Naive thymus-derived CD4-positive, alpha-beta T cell (primary cell): ENCODE measurements at regions of chr1 and their contacts with region 1.

Region 1: DNA sequence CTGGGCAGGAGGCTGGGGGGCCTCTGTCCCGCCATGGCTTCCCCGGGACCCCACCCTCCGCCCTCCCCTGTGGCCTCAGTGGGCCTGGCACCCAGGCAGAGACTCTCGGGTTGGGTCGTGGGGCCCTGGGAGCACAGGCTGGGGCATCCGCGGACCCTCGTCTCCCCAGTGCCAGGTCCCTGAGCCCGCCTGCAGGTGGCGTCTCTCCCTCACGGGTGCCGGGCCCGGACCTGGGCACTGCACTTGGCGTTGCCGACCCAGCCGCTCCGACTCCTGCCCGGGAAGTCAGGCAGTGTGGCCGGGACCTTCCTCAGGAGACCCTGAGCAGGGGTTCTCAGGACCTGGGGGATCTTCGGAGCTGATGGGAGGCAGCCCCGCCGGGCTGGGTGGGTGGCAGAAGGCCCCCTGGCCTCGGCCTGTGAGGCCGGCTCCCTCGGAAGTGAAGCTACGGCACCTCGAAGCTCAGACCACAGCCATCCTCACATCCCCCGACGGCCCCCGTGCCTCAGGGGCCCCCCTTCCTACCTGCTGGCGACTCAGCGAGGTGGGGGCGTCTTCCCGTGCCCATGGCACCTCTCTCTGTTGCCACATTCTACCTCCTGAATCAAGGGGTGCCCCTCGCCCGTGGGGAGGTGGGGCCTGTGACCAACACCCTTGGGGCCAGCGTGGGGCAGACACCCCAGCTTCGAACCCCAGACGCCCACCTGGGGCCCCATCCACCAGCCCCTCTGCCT is 6.4 kb upstream of the C1orf159 start:
- DNase-seq: peak; percentile 60 to 90 (median 80)
- ATAC-seq: peak; percentile 96
- H3K4me3 ChIP-seq: peak overlapping the region; percentile 45
- H3K4me3 Mint-ChIP-seq: peak overlapping the region in 4 of 10 donors; percentile 20 to 49 (median 32)
- H3K27ac ChIP-seq: peak overlapping the region; percentile 47
- H3K27ac Mint-ChIP-seq: peak overlapping the region in 1 of 9 donors; percentile 52
- H3K4me1 ChIP-seq: peaks cover 5 to 10% of the 10 kb centered on the region in 2 donors
- H3K4me1 Mint-ChIP-seq: peaks cover 0 to 15% (median 3%) of the 10 kb centered on the region in 7 donors
- H3K27me3 ChIP-seq: no peaks in the 10 kb centered on the region
- H3K27me3 Mint-ChIP-seq: peaks cover 0 to 15% (median 0%) of the 10 kb centered on the region in 5 donors

Region 2: DNA sequence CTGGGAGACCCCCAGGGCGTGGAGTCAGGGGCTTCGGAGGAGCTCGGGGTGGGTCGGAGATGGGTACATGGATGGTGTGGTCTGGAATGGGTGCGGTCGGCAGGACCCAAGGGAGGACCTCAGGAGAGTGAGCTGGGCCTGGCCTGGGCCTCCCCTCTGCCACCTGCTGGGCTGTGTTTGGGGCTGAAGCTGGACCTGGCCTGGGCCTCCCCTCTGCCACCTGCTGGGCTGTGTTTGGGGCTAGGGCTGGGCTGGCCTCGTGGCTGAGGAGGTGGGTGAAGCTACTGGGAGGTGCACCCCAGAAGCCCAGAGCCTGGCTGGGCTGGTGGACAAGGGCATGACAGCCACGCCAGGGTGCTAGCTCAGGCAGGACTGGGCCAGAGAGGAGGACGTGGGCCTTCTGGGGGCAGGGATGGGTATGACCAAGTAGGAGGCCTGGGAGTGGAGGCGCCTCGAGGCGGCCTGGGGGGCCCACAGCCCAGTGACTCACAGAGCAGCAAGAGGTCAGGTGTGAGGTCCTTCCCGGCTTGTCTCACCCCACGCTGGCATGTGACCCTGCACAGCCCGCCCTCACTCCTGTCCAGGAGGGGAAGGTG is 184.1 kb before region 1 on chr1:
- CTCF ChIA-PET with region 1: no interaction called
- POLR2A ChIA-PET with region 1: no interaction called
- intact Hi-C with region 1: no loop called
- DNase-seq: no peak
- ATAC-seq: peak; percentile 48
- H3K4me3 ChIP-seq: no peak overlapping the region
- H3K4me3 Mint-ChIP-seq: peak overlapping the region in 2 of 10 donors; percentile 12 to 30
- H3K27ac ChIP-seq: no peak overlapping the region
- H3K27ac Mint-ChIP-seq: no peak overlapping the region
- H3K4me1 ChIP-seq: peaks cover 3 to 18% of the 10 kb centered on the region in 2 donors
- H3K4me1 Mint-ChIP-seq: peaks cover 4 to 11% (median 10%) of the 10 kb centered on the region in 7 donors
- H3K27me3 ChIP-seq: peaks cover 3 to 11% of the 10 kb centered on the region in 2 donors
- H3K27me3 Mint-ChIP-seq: peaks cover 10 to 54% (median 26%) of the 10 kb centered on the region in 5 donors

Region 3: DNA sequence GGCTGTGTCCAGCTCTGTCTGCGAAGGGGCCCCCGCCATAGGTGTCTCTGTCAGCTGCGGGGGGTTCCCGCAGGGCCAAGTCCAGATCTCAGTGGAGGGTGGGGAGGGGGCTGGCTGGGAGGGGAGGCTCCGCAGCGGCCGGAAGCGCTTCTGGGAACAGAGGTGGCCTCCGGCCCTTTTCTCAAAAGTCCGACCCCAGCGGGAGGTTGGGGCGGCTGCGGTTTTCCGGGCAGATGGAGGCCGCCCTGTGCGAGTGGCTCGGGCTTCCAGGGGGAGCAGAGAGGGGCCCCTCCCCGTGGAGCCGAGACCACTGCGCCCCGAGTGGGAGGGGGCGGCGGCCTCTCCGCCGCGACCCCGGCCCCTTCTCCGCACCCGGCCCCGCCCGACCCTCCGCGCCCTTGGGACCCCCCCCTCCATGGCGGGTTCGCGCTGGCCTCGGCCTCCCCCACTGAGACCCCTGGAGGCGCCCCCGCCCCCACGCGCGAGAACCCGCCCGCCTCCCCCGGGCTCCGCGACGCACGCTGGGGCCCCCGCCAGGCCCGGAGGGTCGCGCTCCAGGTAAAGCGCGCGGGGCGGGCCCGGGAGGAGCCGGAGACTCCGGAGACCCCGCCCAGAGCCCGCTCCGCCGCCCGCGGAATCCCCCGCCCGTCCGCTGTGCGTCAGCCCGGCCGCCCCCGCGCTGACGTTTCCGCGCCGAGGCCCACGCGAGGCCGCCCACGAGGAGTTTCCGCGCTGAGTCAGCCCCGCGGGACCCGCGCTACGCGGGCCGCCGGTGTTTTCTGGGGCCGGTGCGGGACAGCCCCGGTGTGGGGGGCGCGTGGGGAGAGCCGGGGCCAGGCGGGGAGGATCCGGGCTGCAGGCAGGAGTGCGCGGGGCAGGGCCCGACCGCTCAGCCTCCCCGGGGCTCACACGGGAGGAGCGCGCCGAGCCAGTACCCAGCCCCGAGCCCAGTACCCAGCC is 78.9 kb after region 1 on chr1:
- CTCF ChIA-PET with region 1: no interaction called
- POLR2A ChIA-PET with region 1: no interaction called
- intact Hi-C with region 1: loop called in 1 of 2 experiments (anchors 2 kb)
- DNase-seq: peak; percentile 74 to 97 (median 83)
- ATAC-seq: peak; percentile 92
- H3K4me3 ChIP-seq: peak overlapping the region; percentile 24
- H3K4me3 Mint-ChIP-seq: peak overlapping the region in 9 of 10 donors; percentile 27 to 75 (median 59)
- H3K27ac ChIP-seq: peak overlapping the region; percentile 72
- H3K27ac Mint-ChIP-seq: peak overlapping the region in 5 of 9 donors; percentile 40 to 75 (median 62)
- H3K4me1 ChIP-seq: no peaks in the 10 kb centered on the region
- H3K4me1 Mint-ChIP-seq: peaks cover 0 to 11% (median 0%) of the 10 kb centered on the region in 7 donors
- H3K27me3 ChIP-seq: no peaks in the 10 kb centered on the region
- H3K27me3 Mint-ChIP-seq: no peaks in the 10 kb centered on the region

Region 4: GRCh38 chr1:1212780-1213344 is 90.6 kb after region 1 on chr1:
- CTCF ChIA-PET with region 1: no interaction called
- POLR2A ChIA-PET with region 1: no interaction called
- intact Hi-C with region 1: loop called (anchors 2 to 5 kb)
- DNase-seq: peak in 2 of 9 donors; percentile 11 to 71
- ATAC-seq: peak; percentile 50
- H3K4me3 ChIP-seq: peak overlapping the region; percentile 43
- H3K4me3 Mint-ChIP-seq: peak overlapping the region in 4 of 10 donors; percentile 23 to 78 (median 69)
- H3K27ac ChIP-seq: peak overlapping the region; percentile 50
- H3K27ac Mint-ChIP-seq: peak overlapping the region in 1 of 9 donors; percentile 62
- H3K4me1 ChIP-seq: peaks cover 17 to 27% of the 10 kb centered on the region in 2 donors
- H3K4me1 Mint-ChIP-seq: peaks cover 6 to 44% (median 29%) of the 10 kb centered on the region in 7 donors
- H3K27me3 ChIP-seq: no peaks in the 10 kb centered on the region
- H3K27me3 Mint-ChIP-seq: no peaks in the 10 kb centered on the region

Region 5: DNA sequence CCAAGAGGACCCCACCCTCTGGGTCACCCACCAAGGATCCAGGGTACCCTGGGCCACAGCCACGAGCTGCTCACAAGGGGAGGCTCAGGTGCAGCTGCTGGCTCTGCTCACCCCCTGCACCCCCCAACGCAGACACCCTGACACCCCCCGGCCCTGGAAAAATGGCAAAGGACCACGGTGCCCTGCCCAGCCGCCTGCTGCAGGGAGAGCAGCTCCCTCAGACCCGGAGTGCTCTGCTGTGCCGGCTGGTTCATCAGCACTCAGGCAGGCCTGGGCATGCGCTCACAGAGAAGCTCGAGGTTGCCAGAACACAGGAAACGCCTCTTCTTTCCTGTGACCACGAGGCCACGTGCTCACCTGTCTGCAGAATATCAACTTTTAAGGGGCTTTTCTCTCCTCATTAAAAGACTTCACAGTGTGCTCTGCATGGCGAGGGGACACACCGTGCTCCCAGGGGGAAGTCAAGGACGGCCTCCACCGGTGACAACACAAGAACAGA is 128.6 kb after region 1 on chr1:
- CTCF ChIA-PET with region 1: interaction called, 10 read pairs
- POLR2A ChIA-PET with region 1: no interaction called
- intact Hi-C with region 1: loop called (anchors 1 kb)
- DNase-seq: peak in 8 of 9 donors; percentile 39 to 79 (median 67)
- ATAC-seq: peak; percentile 95
- H3K4me3 ChIP-seq: peak overlapping the region; percentile 14
- H3K4me3 Mint-ChIP-seq: peak overlapping the region; percentile 33 to 82 (median 74)
- H3K27ac ChIP-seq: peak overlapping the region; percentile 69
- H3K27ac Mint-ChIP-seq: peak overlapping the region; percentile 40 to 96 (median 91)
- H3K4me1 ChIP-seq: peaks cover 10 to 12% of the 10 kb centered on the region in 2 donors
- H3K4me1 Mint-ChIP-seq: peaks cover 4 to 29% (median 11%) of the 10 kb centered on the region in 7 donors
- H3K27me3 ChIP-seq: no peaks in the 10 kb centered on the region
- H3K27me3 Mint-ChIP-seq: peaks cover 0 to 3% (median 0%) of the 10 kb centered on the region in 5 donors

Region 6: DNA sequence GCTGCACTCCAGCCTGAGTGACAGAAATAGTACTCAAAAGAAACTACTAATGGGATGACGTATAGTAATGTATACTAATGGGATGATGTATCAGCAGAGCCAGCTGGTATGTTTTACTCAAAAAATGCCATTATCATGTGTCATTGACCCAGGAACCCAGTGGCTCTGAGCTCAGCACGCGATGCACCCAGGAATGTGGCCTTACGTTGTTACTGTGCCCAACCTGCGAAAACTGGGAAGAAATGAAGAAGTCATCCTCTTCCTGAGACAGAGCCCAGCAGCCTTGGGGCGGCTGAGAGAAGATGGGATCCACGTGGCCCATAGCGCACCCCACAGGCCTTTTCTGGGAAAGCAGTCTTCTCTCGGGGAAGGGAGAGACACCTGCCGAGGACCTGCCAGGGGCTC is 142.6 kb after region 1 on chr1:
- CTCF ChIA-PET with region 1: interaction called, 6 read pairs
- POLR2A ChIA-PET with region 1: no interaction called
- intact Hi-C with region 1: loop called in 1 of 2 experiments (anchors 2 kb)
- DNase-seq: peak in 1 of 9 donors; percentile 18
- ATAC-seq: peak; percentile 31
- H3K4me3 ChIP-seq: no peak overlapping the region
- H3K4me3 Mint-ChIP-seq: peak overlapping the region in 1 of 10 donors; percentile 20
- H3K27ac ChIP-seq: no peak overlapping the region
- H3K27ac Mint-ChIP-seq: peak overlapping the region in 1 of 9 donors; percentile 46
- H3K4me1 ChIP-seq: peaks cover 0 to 2% of the 10 kb centered on the region in 2 donors
- H3K4me1 Mint-ChIP-seq: peaks cover 10 to 33% (median 21%) of the 10 kb centered on the region in 7 donors
- H3K27me3 ChIP-seq: no peaks in the 10 kb centered on the region
- H3K27me3 Mint-ChIP-seq: no peaks in the 10 kb centered on the region

Region 7: GRCh38 chr1:1291548-1292441 is 169.6 kb after region 1 on chr1:
- CTCF ChIA-PET with region 1: interaction called, 29 read pairs
- POLR2A ChIA-PET with region 1: interaction called, 6 read pairs
- intact Hi-C with region 1: loop called in 1 of 2 experiments (anchors 2 kb)
- DNase-seq: peak; percentile 51 to 71 (median 58)
- ATAC-seq: peak; percentile 76
- H3K4me3 ChIP-seq: no peak overlapping the region
- H3K4me3 Mint-ChIP-seq: no peak overlapping the region
- H3K27ac ChIP-seq: no peak overlapping the region
- H3K27ac Mint-ChIP-seq: peak overlapping the region in 1 of 9 donors; percentile 14
- H3K4me1 ChIP-seq: no peaks in the 10 kb centered on the region
- H3K4me1 Mint-ChIP-seq: peaks cover 0 to 4% (median 0%) of the 10 kb centered on the region in 7 donors
- H3K27me3 ChIP-seq: no peaks in the 10 kb centered on the region
- H3K27me3 Mint-ChIP-seq: no peaks in the 10 kb centered on the region